MCF 10A (cell line): ENCODE measurements at regions of chr7 and their contacts with region 1.

Region 1: DNA sequence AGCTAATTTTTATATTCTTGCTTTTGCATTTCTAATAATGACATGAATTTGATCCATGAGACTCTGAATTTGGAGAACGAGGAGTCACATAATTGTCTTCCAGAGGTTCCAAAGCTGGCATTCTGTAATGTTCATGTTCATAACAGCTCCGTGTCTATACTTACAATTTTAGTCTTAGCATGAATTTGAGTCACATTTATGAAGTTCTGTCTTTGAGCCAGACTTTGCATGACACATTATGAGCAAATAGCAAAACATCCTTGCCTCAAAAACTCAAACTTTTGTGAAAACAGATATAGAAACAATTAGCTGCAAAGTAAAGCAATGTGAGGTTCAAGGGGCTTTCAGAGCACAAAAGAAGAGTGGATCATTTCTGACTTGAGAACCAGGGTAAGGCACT is 44.5 kb upstream of the CAV2 start:
- DNase-seq: peak; percentile 49
- H3K4me3 Mint-ChIP-seq: no peak overlapping the region
- H3K27ac Mint-ChIP-seq: peak overlapping the region; percentile 61
- H3K4me1 Mint-ChIP-seq: peaks cover 14% of the 10 kb centered on the region
- H3K27me3 Mint-ChIP-seq: no peaks in the 10 kb centered on the region
- CTCF ChIP-seq: no peak

Region 2: GRCh38 chr7:116150588-116150987 is 304.4 kb before region 1 on chr7:
- CTCF ChIA-PET with region 1: no interaction called
- POLR2A ChIA-PET with region 1: no interaction called
- intact Hi-C with region 1: no loop called
- DNase-seq: no peak
- H3K4me3 Mint-ChIP-seq: no peak overlapping the region
- H3K27ac Mint-ChIP-seq: no peak overlapping the region
- H3K4me1 Mint-ChIP-seq: no peaks in the 10 kb centered on the region
- H3K27me3 Mint-ChIP-seq: peaks cover 80% of the 10 kb centered on the region
- CTCF ChIP-seq: no peak

Region 3: DNA sequence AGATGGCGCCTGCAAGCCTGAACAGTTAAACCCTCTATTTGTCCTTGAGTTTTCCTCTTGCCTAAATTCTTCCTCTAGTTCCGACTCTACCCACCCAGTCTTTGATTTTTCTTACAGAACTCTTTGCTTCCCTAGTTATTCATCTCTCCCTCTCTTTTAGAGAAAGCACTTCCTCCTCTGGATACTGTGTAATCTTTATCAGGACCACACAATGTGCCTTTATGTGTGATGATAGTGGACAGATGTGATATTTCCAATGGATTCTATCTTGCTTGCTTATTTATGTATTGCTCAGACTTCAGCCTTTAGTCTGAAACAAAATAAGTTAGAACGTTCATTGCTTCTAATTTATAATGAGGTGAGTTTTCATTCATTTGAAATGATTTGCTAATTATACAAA is 35.0 kb before region 1 on chr7:
- CTCF ChIA-PET with region 1: no interaction called
- POLR2A ChIA-PET with region 1: no interaction called
- intact Hi-C with region 1: no loop called
- DNase-seq: no peak
- H3K4me3 Mint-ChIP-seq: no peak overlapping the region
- H3K27ac Mint-ChIP-seq: no peak overlapping the region
- H3K4me1 Mint-ChIP-seq: peaks cover 31% of the 10 kb centered on the region
- H3K27me3 Mint-ChIP-seq: no peaks in the 10 kb centered on the region
- CTCF ChIP-seq: no peak

Region 4: GRCh38 chr7:116443101-116443523 is 11.9 kb before region 1 on chr7:
- CTCF ChIA-PET with region 1: interaction called, 4 read pairs
- POLR2A ChIA-PET with region 1: interaction called, 16 read pairs
- intact Hi-C with region 1: no loop called
- DNase-seq: peak; percentile 93
- H3K4me3 Mint-ChIP-seq: peak overlapping the region; percentile 6
- H3K27ac Mint-ChIP-seq: peak overlapping the region; percentile 93
- H3K4me1 Mint-ChIP-seq: peaks cover 38% of the 10 kb centered on the region
- H3K27me3 Mint-ChIP-seq: no peaks in the 10 kb centered on the region
- CTCF ChIP-seq: no peak